Psoas muscle (tissue), 8 donors: ENCODE measurements at regions of chr9 and their contacts with region 1.

Region 1: GRCh38 chr9:14347406-14348122 is 33.6 kb upstream of the NFIB start:
- DNase-seq: peak; percentile 74 to 85
- ATAC-seq: peak; percentile 66 to 81 (median 77)
- H3K4me3 ChIP-seq: peak overlapping the region; percentile 71
- H3K27ac ChIP-seq: peak overlapping the region; percentile 83
- H3K4me1 ChIP-seq: peaks cover 30% of the 10 kb centered on the region
- H3K27me3 ChIP-seq: no peaks in the 10 kb centered on the region
- CTCF ChIP-seq: no peak

Region 2: GRCh38 chr9:14030375-14031059 is 317.0 kb before region 1 on chr9:
- intact Hi-C with region 1: loop called in 1 of 2 experiments (anchors 10 kb)
- DNase-seq: no peak
- ATAC-seq: peak; percentile 64 to 82 (median 76)
- H3K4me3 ChIP-seq: peak overlapping the region; percentile 55
- H3K27ac ChIP-seq: peak overlapping the region; percentile 85
- H3K4me1 ChIP-seq: peaks cover 37% of the 10 kb centered on the region
- H3K27me3 ChIP-seq: no peaks in the 10 kb centered on the region
- CTCF ChIP-seq: no peak